Ovary (tissue), 10 donors: ENCODE measurements at regions of chr10 and their contacts with region 1.

Region 1: DNA sequence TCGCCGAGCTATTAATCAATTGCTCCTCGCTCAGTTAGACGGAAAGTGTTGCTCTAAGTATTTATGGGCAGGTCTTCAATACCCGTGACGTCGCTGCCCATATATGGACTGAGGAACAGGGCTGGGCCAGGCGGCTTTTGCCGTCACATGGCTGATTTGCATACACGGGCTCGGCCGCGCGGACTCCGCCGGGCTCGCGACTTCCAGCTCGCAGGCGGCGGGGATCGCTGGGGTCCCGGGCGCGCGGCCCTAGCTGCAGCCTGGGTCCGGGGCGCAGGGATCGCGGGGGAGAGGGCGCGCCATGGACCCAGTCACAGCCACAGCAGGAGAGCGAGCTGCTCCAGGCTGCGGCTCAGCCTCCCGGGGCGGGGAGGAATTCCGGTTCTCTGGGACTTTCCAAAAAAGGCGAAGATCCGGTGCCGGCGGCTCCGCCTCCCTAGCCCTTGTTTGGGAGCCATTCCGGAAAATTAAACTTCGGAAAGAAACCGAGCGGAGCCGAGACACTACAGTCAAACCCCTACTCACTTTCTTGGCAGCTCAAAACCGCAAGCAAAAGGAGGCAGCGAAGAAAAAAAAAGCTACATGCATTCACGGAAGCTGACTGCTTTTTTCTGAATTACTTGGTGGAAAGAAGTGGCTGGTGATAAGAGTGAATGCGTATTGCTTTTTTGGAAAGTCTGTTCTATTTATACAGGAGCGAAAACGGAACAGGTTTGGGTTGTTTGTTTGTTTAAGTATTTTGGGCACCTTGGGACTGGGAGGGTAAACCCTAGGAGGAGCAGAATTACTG is at the start of gene EGR2:
- DNase-seq: peak; percentile 84 to 93 (median 91)
- H3K4me3 ChIP-seq: peak within 1 kb of the TSS; percentile 81
- H3K27ac ChIP-seq: peak within 1 kb of the TSS; percentile 81 to 84
- H3K4me1 ChIP-seq: peaks cover 18% of the 10 kb centered on the region
- H3K27me3 ChIP-seq: no peaks in the 10 kb centered on the region
- CTCF ChIP-seq: no peak
- EP300 ChIP-seq: no peak
- POLR2A ChIP-seq: peak; percentile 16
- total RNA-seq, gene EGR2: 0.48 to 13.0 (median 4.6) TPM

Region 2: GRCh38 chr10:63133056-63133820 is 316.7 kb after region 1 on chr10 and contains the start of gene NRBF2:
- intact Hi-C with region 1: loop called in 1 of 4 experiments (anchors 10 kb)
- DNase-seq: peak; percentile 96 to 98 (median 97)
- H3K4me3 ChIP-seq: peak within 1 kb of the TSS; percentile 95
- H3K27ac ChIP-seq: peak within 1 kb of the TSS; percentile 54 to 78
- H3K4me1 ChIP-seq: peaks cover 4% of the 10 kb centered on the region
- H3K27me3 ChIP-seq: no peaks in the 10 kb centered on the region
- CTCF ChIP-seq: no peak
- EP300 ChIP-seq: no peak
- POLR2A ChIP-seq: peak; percentile 86
- total RNA-seq, gene NRBF2: 4.8 to 16.7 (median 12.9) TPM